Caco-2 (cell line): ENCODE measurements at regions of chr10 and their contacts with region 1.

Region 1: GRCh38 chr10:35781643-35782035 is 139.5 kb upstream of the FZD8 start:
- DNase-seq: peak; percentile 64 to 76
- H3K4me3 ChIP-seq: no peak overlapping the region
- H3K4me3 Mint-ChIP-seq: no peak overlapping the region
- H3K27ac Mint-ChIP-seq: no peak overlapping the region
- H3K4me1 ChIP-seq: no peaks in the 10 kb centered on the region
- H3K4me1 Mint-ChIP-seq: no peaks in the 10 kb centered on the region
- H3K27me3 ChIP-seq: no peaks in the 10 kb centered on the region
- H3K27me3 Mint-ChIP-seq: no peaks in the 10 kb centered on the region
- CTCF ChIP-seq: peak; percentile 80 to 83

Region 2: GRCh38 chr10:35642027-35642792 is 139.4 kb before region 1 on chr10 and contains the start of gene FZD8:
- CTCF ChIA-PET with region 1: no interaction called
- POLR2A ChIA-PET with region 1: no interaction called
- intact Hi-C with region 1: loop called (anchors 1 kb)
- DNase-seq: peak; percentile 94 to 96
- H3K4me3 ChIP-seq: peak within 1 kb of the TSS; percentile 76
- H3K4me3 Mint-ChIP-seq: peak within 1 kb of the TSS; percentile 89
- H3K27ac Mint-ChIP-seq: no peak within 1 kb of the TSS
- H3K4me1 ChIP-seq: peaks cover 3% of the 10 kb centered on the region; the same call in 1 of the 2 replicates
- H3K4me1 Mint-ChIP-seq: no peaks in the 10 kb centered on the region
- H3K27me3 ChIP-seq: peaks cover 4% of the 10 kb centered on the region
- H3K27me3 Mint-ChIP-seq: peaks cover 17% of the 10 kb centered on the region
- CTCF ChIP-seq: peak in 1 of 2 experiments; percentile 37
- total RNA-seq, gene FZD8: 2.4 and 3.4 TPM in 2 replicates

Region 3: DNA sequence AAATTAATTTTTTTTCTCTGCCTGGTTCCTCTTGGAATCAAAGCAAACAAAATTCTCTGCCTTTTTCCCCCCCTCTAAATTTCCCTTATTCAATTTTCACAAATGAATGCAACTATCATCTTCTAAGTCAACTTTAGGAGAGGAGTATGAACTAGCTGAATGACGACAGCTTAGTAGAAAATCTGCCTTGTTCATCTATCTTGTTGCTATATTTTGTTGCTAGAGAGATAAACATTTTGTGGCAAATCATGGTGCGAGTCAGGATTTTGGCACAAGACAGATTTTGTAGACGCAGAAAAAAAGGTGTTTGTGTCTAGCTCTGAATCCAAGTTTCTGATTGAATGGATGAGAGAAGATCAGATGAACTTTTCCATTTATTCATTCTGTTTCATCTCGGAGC is 58.6 kb before region 1 on chr10:
- CTCF ChIA-PET with region 1: no interaction called
- POLR2A ChIA-PET with region 1: no interaction called
- intact Hi-C with region 1: loop called (anchors 2 kb)
- DNase-seq: no peak
- H3K4me3 ChIP-seq: no peak overlapping the region
- H3K4me3 Mint-ChIP-seq: no peak overlapping the region
- H3K27ac Mint-ChIP-seq: no peak overlapping the region
- H3K4me1 ChIP-seq: peaks cover 7% of the 10 kb centered on the region; the same call in 1 of the 2 replicates
- H3K4me1 Mint-ChIP-seq: peaks cover 9% of the 10 kb centered on the region
- H3K27me3 ChIP-seq: no peaks in the 10 kb centered on the region
- H3K27me3 Mint-ChIP-seq: peaks cover 9% of the 10 kb centered on the region
- CTCF ChIP-seq: no peak

Region 4: GRCh38 chr10:35770817-35771355 is 10.8 kb before region 1 on chr10:
- CTCF ChIA-PET with region 1: interaction called, 15 read pairs
- POLR2A ChIA-PET with region 1: no interaction called
- intact Hi-C with region 1: loop called (anchors 1 kb)
- DNase-seq: peak; percentile 89 to 94
- H3K4me3 ChIP-seq: no peak overlapping the region
- H3K4me3 Mint-ChIP-seq: peak overlapping the region; percentile 22
- H3K27ac Mint-ChIP-seq: no peak overlapping the region
- H3K4me1 ChIP-seq: peaks cover 68% of the 10 kb centered on the region
- H3K4me1 Mint-ChIP-seq: peaks cover 35% of the 10 kb centered on the region
- H3K27me3 ChIP-seq: no peaks in the 10 kb centered on the region
- H3K27me3 Mint-ChIP-seq: no peaks in the 10 kb centered on the region
- CTCF ChIP-seq: no peak

Region 5: DNA sequence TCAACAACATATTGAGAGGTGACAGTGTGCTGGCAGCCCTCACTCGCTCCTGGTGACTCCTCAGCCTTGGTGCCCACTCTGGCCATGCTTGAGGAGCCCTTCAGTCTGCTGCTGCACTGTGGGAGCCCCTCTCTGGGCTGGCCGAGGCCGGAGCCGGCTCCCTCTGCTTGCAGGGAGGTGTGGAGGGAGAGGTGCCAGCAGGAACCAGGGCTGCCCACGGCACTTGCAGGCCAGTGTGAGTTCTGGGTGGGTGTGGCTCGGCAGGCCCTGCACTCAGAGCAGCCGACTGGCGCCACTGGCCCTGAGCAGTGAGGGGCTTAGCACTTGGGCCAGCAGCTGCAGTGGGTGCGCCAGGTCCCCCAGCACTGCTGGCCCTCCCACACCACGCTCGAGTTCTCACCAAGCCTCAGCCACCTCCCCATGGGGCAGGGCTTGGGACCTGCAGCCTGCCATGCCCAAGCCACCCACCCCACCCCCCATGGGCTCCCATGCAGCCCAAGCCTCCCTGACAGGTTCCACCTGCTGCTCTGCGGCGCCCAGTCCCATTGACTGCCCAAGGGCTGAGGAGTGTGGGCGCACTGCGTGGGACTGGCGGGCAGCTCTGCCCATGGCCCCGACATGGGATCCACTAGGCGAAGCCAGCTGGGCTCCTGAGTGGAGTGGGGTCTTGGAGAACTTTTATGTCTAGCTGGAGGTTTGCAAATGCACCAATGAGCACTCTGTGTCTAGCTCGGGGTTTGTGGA is 966.7 kb after region 1 on chr10:
- CTCF ChIA-PET with region 1: no interaction called
- POLR2A ChIA-PET with region 1: interaction called, 11 read pairs
- intact Hi-C with region 1: no loop called
- DNase-seq: no peak
- H3K4me3 ChIP-seq: no peak overlapping the region
- H3K4me3 Mint-ChIP-seq: no peak overlapping the region
- H3K27ac Mint-ChIP-seq: no peak overlapping the region
- H3K4me1 ChIP-seq: no peaks in the 10 kb centered on the region
- H3K4me1 Mint-ChIP-seq: no peaks in the 10 kb centered on the region
- H3K27me3 ChIP-seq: no peaks in the 10 kb centered on the region
- H3K27me3 Mint-ChIP-seq: peaks cover 3% of the 10 kb centered on the region
- CTCF ChIP-seq: no peak

Region 6: DNA sequence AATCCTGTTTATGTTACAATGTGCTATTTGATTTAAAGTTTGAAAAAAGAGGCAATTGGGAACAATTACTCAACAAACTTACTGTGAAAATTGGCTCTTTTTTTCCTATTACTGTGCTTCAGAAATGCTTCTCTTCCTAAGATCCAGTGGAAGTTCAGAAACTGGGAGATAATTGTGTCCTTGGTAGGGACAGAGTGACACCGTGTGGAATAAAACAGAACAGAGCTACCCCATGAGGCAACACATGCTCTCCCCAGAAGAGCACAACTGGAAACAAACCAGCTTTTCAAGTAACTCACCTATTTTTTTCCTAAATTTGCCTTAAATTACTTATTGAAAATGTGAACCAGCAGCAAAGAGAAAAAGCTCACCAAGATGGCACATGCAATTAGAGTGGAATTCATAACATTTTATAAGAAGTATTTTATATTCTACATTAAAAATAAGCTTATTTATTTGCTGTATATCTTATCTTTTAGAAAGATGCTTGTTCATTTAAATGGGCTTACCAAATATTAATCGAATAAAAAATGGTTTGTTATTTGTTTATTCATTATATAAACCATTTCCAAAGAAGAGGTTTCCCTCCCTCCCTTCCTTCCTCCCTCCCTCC is 997.7 kb after region 1 on chr10:
- CTCF ChIA-PET with region 1: no interaction called
- POLR2A ChIA-PET with region 1: no interaction called
- intact Hi-C with region 1: loop called (anchors 1 kb)
- DNase-seq: peak in 1 of 2 experiments; percentile 55
- H3K4me3 ChIP-seq: no peak overlapping the region
- H3K4me3 Mint-ChIP-seq: no peak overlapping the region
- H3K27ac Mint-ChIP-seq: no peak overlapping the region
- H3K4me1 ChIP-seq: no peaks in the 10 kb centered on the region
- H3K4me1 Mint-ChIP-seq: no peaks in the 10 kb centered on the region
- H3K27me3 ChIP-seq: no peaks in the 10 kb centered on the region
- H3K27me3 Mint-ChIP-seq: peaks cover 17% of the 10 kb centered on the region
- CTCF ChIP-seq: peak; percentile 72 to 76